H1 (cell line): ENCODE measurements at regions of chr6 and their contacts with region 1.

Region 1: DNA sequence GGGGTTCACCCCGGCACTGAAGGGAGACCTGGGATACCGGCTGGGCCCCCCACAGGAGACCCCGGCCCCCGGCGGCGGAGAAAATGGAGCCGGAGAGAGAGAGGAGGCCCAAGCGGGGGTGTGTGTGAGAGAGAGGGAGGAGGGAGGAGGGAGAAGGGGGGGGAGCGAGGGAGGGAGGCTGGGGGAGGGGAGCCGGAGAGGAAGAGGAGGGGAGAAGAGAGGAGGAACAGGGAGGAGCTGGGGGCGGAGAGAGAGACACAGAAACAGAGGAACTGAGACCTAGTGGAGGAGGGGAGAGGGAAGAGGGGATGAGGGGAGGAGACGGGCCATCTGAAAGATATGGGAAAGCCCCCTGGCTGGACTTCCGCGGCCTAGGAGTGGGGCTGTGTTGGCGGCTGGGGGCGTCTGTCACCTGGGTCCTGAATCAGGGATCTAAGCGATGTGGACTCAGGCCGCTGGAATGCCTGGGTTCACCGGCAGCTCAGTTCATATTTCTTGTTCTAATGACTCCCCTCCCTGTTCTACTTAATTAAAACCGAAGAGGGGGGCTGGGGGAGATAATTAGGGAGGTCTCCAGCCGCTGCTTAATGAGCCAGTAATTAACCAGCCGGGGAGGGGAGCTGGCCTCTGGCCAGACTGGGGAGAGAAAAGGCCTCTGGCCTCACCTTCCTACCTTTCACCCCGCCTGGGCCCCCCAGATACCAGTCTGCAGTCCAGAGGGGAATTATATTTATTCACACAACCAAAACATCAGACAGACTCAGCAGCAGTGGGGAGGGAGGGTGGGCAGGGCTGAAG is at the start of gene PBX2:
- DNase-seq: peak; percentile 65 to 70
- H3K4me3 ChIP-seq: peak within 1 kb of the TSS; percentile 30 to 87 (median 64)
- H3K27ac ChIP-seq: peak within 1 kb of the TSS; percentile 76
- H3K4me1 ChIP-seq: peaks cover 8 to 36% (median 18%) of the 10 kb centered on the region in 4 experiments
- H3K27me3 ChIP-seq: no peaks in the 10 kb centered on the region
- CTCF ChIP-seq: no peak
- EP300 ChIP-seq: no peak
- POLR2A ChIP-seq: no peak; a peak in 1 of 3 replicates
- RAD21 ChIP-seq: no peak
- total RNA-seq, gene PBX2: 130 and 133 TPM in 2 replicates

Region 2: DNA sequence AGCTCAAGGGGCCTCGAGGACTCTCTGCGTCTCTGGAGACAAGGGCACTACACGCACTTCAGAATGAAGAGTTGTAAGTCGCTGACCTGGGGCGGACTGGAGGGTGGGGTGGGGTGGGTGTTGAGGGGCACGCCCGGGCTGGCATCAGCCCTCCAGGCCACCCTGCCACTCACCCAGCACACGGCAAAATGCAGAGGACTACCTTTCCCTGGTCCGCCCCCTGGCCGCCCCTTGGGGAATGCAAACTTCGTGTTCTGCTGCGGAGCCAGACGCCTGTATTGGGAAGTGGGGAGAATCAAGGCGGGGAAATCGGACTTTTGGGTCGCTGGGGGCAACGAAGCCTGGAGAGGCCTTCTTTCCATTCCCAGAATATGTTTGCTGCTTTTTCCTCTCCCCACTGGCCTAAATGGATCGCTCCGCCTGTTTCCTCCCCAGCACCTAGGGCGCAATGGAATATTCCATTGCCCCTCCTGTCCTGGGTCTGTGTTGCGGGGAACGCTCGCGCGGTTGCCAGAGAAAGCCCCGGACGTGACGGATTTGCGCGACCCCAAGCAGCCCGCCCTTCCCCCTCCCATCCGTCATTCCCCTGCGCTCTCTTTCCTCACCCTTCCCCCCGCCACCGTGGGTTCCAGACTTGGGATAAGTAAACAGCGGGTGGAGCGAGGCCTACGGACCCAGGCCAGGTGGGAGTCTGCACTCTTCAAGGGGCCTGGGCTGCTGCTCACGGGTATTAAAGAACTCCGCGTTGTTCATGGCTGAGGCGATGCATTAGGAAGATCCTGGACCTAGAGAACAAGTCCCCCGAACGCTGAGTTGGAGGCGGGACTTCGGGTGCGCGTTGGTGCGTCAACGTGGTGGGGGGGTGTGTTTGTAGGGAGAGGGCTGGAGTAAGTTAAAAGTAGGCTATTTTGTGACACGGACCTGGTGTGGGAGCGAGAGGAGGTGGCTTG is 36.4 kb before region 1 on chr6 and contains the start of gene PPT2:
- CTCF ChIA-PET with region 1: interaction called, 8 read pairs
- POLR2A ChIA-PET with region 1: interaction called, 27 read pairs
- DNase-seq: peak; percentile 74 to 88
- H3K4me3 ChIP-seq: peak within 1 kb of the TSS; percentile 77 to 98 (median 92)
- H3K27ac ChIP-seq: peak within 1 kb of the TSS; percentile 70
- H3K4me1 ChIP-seq: peaks cover 10 to 28% (median 16%) of the 10 kb centered on the region in 4 experiments
- H3K27me3 ChIP-seq: peaks cover 4 to 40% (median 37%) of the 10 kb centered on the region in 4 experiments
- CTCF ChIP-seq: peak in 2 of 3 experiments; percentile 13 to 24; a peak in 3 of 4 replicates
- EP300 ChIP-seq: peak in 1 of 2 experiments; percentile 97; a peak in 2 of 3 replicates
- POLR2A ChIP-seq: peak in 1 of 2 experiments; percentile 71; a peak in 1 of 3 replicates
- RAD21 ChIP-seq: 0 out of 4 replicates have a peak, but pooled peaks of 1 of the 2 experiments have one; percentile 9
- total RNA-seq, gene PPT2: 24.1 and 27.9 TPM in 2 replicates

Region 3: DNA sequence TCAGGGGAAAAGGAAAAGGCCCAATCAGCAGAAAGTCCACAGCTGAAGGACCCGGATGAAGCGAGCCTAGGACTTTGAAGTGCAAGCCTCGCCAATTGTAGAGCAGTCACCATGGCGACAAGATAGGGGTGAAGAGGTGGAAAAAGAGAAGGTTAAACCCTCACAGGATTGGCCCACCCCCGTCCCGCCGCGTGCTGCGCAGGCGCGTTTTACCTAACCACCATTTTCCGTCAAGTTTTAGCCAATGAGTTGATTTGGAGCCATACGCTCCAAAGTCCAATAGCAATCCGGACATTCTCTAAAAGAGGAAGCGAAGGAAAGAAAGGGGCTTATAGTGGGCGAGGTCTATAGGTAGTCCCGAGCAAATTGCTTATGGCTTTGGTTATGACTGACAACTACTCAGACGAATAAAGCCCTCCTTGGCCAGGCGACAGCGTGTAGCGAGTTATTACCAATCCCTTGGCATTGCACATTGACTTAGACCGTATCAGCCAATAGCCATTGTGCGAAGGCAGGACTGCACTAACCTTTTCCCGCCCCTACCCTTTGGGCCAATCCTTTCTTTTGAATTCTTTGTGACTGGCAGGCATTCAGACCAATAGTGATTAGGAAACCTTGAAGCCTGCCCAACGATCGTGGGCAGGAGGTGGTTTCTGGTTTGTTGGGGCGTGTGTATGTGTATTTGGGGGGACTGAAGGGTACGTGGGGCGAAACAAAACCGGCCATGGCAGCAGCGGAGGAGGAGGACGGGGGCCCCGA is 12.3 kb before region 1 on chr6 and contains the start of gene RNF5:
- CTCF ChIA-PET with region 1: interaction called, 10 read pairs
- POLR2A ChIA-PET with region 1: interaction called, 194 read pairs
- DNase-seq: peak; percentile 82 to 91
- H3K4me3 ChIP-seq: peak within 1 kb of the TSS; percentile 91 to 99 (median 95)
- H3K27ac ChIP-seq: peak within 1 kb of the TSS; percentile 95
- H3K4me1 ChIP-seq: peaks cover 5 to 20% (median 9%) of the 10 kb centered on the region in 4 experiments; a peak in 6 of 7 replicates
- H3K27me3 ChIP-seq: no peaks in the 10 kb centered on the region; a peak in 1 of 7 replicates
- CTCF ChIP-seq: no peak
- EP300 ChIP-seq: no peak
- POLR2A ChIP-seq: peak in 1 of 2 experiments; percentile 71; a peak in 1 of 3 replicates
- RAD21 ChIP-seq: no peak
- total RNA-seq, gene RNF5: 90.0 and 90.3 TPM in 2 replicates